ENCODE measurements at regions of chr17 and their contacts with region 1.

Region 1: GRCh38 chr17:44400226-44400847 is 10.9 kb upstream of the ITGA2B start:
- DNase-seq: peak; percentile 23
- H3K4me3 ChIP-seq: no peak overlapping the region
- H3K27ac ChIP-seq: no peak overlapping the region
- H3K4me1 ChIP-seq: peaks cover 5% of the 10 kb centered on the region
- CTCF ChIP-seq: peak; percentile 81

Region 2: DNA sequence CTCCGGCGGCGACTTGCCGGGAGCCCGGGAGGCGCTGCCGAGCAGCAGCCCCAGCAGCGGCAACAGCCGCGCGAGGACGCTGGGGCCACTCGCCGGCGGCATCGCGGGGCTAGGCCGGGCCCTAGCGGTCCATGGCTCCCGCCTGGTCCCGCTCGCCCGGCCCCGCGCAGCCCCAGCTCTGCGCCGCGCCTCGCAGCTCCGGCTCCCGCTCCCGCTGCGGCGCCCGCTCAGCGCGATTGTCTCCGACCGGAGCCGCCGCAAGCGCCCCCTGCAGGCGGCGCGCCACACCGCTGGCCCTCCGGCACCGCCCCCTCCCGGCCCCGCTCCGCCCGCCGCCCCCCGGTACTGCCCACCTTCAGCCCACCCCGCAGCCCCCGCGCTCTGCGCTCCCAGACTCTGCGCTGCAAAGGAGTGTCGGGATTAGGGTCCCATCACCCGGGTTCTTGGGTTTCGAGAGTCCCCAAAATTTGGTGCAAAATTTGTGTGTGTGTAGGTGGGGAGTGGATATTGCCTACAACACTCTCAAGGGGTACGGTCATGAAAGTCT is 36.7 kb before region 1 on chr17 and contains the start of gene FAM171A2:
- CTCF ChIA-PET with region 1: no interaction called
- POLR2A ChIA-PET with region 1: no interaction called
- intact Hi-C with region 1: no loop called
- DNase-seq: peak; percentile 83
- H3K4me3 ChIP-seq: peak within 1 kb of the TSS; percentile 77
- H3K27ac ChIP-seq: no peak within 1 kb of the TSS
- H3K4me1 ChIP-seq: peaks cover 43% of the 10 kb centered on the region
- CTCF ChIP-seq: peak; percentile 74
- total RNA-seq, gene FAM171A2: 3.4 and 8.8 TPM in 2 replicates

Region 3: GRCh38 chr17:44522883-44523671 is 122.7 kb after region 1 on chr17:
- CTCF ChIA-PET with region 1: no interaction called
- POLR2A ChIA-PET with region 1: no interaction called
- intact Hi-C with region 1: loop called (anchors 1 kb)
- DNase-seq: peak; percentile 75
- H3K4me3 ChIP-seq: no peak overlapping the region
- H3K27ac ChIP-seq: no peak overlapping the region
- H3K4me1 ChIP-seq: peaks cover 7% of the 10 kb centered on the region
- CTCF ChIP-seq: peak; percentile 82